Ovary (tissue), 10 donors: ENCODE measurements at regions of chr12 and their contacts with region 1.

Region 1: DNA sequence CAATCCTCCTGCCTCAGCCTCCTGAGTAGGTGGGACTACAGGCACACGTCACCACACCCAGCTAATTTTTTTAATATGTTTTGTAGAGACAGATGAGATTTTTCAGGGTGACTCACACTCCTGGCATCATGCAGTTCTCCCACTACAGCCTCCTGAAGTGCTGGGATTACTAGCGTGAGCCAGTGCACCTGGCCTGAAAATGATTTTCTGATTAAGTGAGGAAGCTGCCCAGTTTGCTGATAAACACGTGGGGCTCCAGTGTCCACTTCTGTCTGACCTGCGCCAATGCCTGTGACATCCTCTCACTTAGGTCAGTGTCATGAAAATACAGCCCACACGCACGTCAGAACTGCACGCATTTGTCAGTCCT is 37.0 kb upstream of the SFSWAP start:
- DNase-seq: no peak
- H3K4me3 ChIP-seq: no peak overlapping the region
- H3K27ac ChIP-seq: no peak overlapping the region
- H3K4me1 ChIP-seq: no peaks in the 10 kb centered on the region
- H3K27me3 ChIP-seq: no peaks in the 10 kb centered on the region
- CTCF ChIP-seq: no peak
- EP300 ChIP-seq: no peak
- POLR2A ChIP-seq: no peak

Region 2: DNA sequence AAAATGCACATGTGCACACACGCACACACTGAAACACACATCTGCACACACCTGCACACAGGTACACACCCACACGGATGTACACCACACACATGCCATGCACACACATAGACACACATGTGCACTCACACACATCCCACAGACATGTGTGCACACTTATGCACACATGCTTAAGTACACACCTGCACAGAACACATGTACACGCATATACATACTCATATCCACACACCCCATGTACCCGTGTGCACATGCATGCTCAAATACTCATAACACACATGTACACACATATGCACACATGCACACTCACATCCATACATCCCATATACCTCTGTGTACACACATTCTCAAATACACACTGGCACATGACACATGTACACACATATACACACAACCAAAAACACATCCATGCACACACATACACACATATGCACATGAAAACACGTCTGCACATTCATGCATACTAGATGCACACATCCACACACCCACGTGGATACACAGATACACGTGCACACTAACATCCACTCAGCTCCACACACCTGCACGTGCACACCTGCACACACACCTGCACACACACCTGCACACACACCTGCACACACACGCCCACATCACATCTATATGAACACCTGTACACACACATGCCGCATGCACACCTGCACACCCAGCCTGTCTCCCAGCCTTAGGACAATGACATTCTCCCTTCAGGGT is 383.5 kb before region 1 on chr12:
- intact Hi-C with region 1: loop called (anchors 5 to 10 kb)
- DNase-seq: peak in 1 of 5 donors; percentile 1
- H3K4me3 ChIP-seq: no peak overlapping the region
- H3K27ac ChIP-seq: no peak overlapping the region
- H3K4me1 ChIP-seq: no peaks in the 10 kb centered on the region
- H3K27me3 ChIP-seq: no peaks in the 10 kb centered on the region
- CTCF ChIP-seq: no peak
- EP300 ChIP-seq: no peak
- POLR2A ChIP-seq: no peak